Dendritic cell treated with granulocyte-macrophage colony-stimulating factor and Interleukin-4, amounts not matched to agents 40 ng/mL and 50 ng/mL, for 4 days (primary cell): ENCODE measurements at regions of chr2 and their contacts with region 1.

Region 1: DNA sequence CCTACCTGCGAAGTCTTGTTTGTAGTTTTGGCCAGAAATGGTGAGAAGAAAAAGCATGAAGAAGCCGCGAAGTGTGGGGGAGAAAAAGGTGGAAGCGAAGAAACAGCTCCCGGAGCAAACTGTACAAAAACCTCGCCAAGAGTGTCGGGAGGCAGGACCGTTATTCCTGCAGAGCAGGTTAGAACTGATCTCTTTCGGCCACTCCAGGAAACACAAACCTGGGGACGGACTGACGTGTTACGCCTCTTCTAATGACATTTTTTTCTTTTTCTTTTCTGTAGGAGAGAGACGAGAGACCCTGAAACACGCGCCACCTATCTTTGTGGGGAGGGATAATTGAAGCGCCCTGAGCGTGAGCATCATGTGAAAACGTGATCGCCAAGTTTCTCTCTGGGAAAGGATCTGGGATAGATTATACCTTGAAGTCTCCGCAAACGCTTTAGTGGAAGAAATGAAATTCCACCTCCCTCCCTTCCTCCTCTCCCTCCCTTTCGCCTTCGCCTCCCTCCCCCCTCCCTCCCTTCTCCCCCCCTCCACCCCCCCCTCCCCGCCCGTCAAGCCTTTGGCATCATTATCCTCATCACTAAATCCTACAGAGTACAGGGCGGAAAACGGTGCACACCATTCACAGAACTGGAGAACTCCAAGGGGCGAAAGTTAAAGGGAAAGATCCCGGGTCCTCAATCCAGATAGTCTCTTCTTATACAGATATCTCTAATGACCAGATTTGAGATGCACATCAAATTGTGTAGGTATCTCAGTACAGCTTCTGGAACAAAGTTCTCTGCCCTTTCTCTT is at the start of gene ZEB2:
- H3K4me3 Mint-ChIP-seq: no peak within 1 kb of the TSS
- H3K27ac Mint-ChIP-seq: no peak within 1 kb of the TSS
- H3K4me1 Mint-ChIP-seq: peaks cover 27% of the 10 kb centered on the region
- H3K27me3 Mint-ChIP-seq: no peaks in the 10 kb centered on the region

Region 2: DNA sequence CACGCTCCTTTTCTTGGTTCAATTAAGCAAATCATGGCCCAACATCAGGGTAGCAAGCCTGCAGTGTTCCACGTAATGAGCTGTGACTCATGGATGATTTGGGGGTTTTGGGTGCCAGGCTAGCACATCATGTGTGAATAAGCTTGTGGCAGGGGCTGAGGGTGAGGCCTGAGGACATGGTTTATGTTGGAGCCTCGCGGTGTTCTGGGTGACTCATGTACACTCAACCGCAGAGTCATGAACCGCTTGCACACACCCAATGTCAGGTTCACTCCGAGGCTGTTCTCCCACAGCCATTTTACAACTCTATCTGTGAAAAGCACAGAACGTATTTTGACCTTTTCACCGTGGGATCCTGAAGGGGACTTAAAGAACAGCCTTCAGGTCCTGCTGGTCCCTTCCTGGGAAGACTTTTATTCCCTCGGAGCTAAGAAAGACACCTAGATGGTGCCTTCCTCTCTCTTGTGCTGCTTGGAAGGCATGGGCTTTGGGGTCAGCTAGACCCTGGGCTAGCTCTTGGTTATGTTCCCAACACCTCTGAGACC is 139.7 kb after region 1 on chr2:
- intact Hi-C with region 1: loop called (anchors 2 kb)
- H3K4me3 Mint-ChIP-seq: peak overlapping the region; percentile 37
- H3K27ac Mint-ChIP-seq: peak overlapping the region; percentile 95
- H3K4me1 Mint-ChIP-seq: peaks cover 61% of the 10 kb centered on the region
- H3K27me3 Mint-ChIP-seq: no peaks in the 10 kb centered on the region

Region 3: GRCh38 chr2:144703852-144704708 is 183.9 kb after region 1 on chr2:
- intact Hi-C with region 1: loop called (anchors 5 kb)
- H3K4me3 Mint-ChIP-seq: no peak overlapping the region
- H3K27ac Mint-ChIP-seq: peak overlapping the region; percentile 95
- H3K4me1 Mint-ChIP-seq: peaks cover 60% of the 10 kb centered on the region
- H3K27me3 Mint-ChIP-seq: no peaks in the 10 kb centered on the region

Region 4: GRCh38 chr2:144825331-144826020 is 305.3 kb after region 1 on chr2:
- intact Hi-C with region 1: loop called (anchors 2 kb)
- H3K4me3 Mint-ChIP-seq: peak overlapping the region; percentile 60
- H3K27ac Mint-ChIP-seq: peak overlapping the region; percentile 93
- H3K4me1 Mint-ChIP-seq: peaks cover 53% of the 10 kb centered on the region
- H3K27me3 Mint-ChIP-seq: no peaks in the 10 kb centered on the region

Region 5: GRCh38 chr2:145752091-145752806 is 1232.1 kb after region 1 on chr2:
- intact Hi-C with region 1: loop called (anchors 2 kb)
- H3K4me3 Mint-ChIP-seq: peak overlapping the region; percentile 53
- H3K27ac Mint-ChIP-seq: peak overlapping the region; percentile 82
- H3K4me1 Mint-ChIP-seq: peaks cover 49% of the 10 kb centered on the region
- H3K27me3 Mint-ChIP-seq: no peaks in the 10 kb centered on the region